Head of caudate nucleus (tissue), 42 donors: ENCODE measurements at regions of chr21 and their contacts with region 1.

Region 1: GRCh38 chr21:20971296-20971921 is 26.8 kb upstream of the NCAM2 start:
- DNase-seq: peak; percentile 44 to 95 (median 86)

Region 2: GRCh38 chr21:20802631-20803260 is 168.7 kb before region 1 on chr21:
- intact Hi-C with region 1: loop called (anchors 10 kb)
- DNase-seq: peak in 39 of 42 donors; percentile 14 to 84 (median 52)

Region 3: GRCh38 chr21:20882462-20883407 is 88.7 kb before region 1 on chr21:
- intact Hi-C with region 1: no loop called
- DNase-seq: peak in 41 of 42 donors; percentile 17 to 88 (median 69)

Region 4: GRCh38 chr21:20902511-20902910 is 68.9 kb before region 1 on chr21:
- intact Hi-C with region 1: loop called (anchors 5 kb)
- DNase-seq: peak in 4 of 42 donors; percentile 8 to 55 (median 36)